ENCODE measurements at regions of chr4 and their contacts with region 1.

Region 1: DNA sequence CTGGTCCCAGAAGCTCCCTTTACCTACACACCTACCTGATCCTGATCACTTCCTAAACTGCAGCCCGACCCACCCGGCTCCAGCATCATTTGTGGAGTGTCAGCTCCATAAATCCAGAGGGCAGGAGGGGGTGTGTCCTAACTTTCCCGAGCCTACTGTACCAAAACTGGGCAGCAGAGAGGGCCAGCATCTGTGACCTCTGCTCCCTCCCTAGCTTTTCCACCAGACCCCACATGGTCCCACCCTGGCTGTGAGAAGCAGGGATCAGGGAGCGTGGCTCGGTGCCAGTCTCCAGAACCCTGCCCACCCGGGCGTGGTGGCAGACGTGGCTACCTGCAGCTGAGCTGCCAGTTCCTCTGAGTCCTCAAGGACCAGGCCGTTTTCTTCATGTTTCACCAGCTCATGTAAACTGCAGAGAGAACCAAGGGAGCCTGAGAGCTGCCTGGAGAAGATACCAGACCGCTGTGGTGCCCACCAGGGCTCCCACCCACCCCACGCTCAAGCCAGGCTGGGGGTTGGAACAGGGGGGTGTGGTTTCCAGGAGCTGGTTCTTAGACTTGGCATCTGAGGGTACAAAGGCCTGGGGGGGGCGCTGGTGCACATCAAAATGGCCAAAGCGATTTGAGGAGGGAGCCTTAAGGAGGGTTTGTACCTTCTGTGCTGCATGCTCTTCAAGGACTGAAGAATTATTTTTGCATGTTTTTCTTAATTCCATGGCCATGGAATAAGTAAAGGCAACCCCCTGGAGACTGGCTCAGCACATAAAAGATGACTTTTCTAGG is 76.7 kb upstream of the DRD5 start:
- DNase-seq: no peak
- ATAC-seq: no peak
- H3K4me3 ChIP-seq: no peak overlapping the region
- H3K27ac ChIP-seq: no peak overlapping the region
- H3K4me1 ChIP-seq: peaks cover 2 to 18% of the 10 kb centered on the region in 2 experiments; a peak in 2 of 4 replicates
- H3K27me3 ChIP-seq: no peaks in the 10 kb centered on the region
- CTCF ChIP-seq: 0 out of 6 replicates have a peak, but pooled peaks of 1 of the 3 experiments have one; percentile 3
- POLR2A ChIP-seq: no peak
- RAD21 ChIP-seq: no peak

Region 2: GRCh38 chr4:9691238-9692065 is 13.3 kb before region 1 on chr4:
- CTCF ChIA-PET with region 1: interaction called, 26 read pairs
- POLR2A ChIA-PET with region 1: no interaction called
- RAD21 ChIA-PET with region 1: no interaction called
- intact Hi-C with region 1: no loop called
- DNase-seq: peak; percentile 85
- ATAC-seq: peak; percentile 100
- H3K4me3 ChIP-seq: peak overlapping the region; percentile 38 to 55
- H3K27ac ChIP-seq: peak overlapping the region; percentile 39; the same call in 1 of the 2 replicates
- H3K4me1 ChIP-seq: peaks cover 3 to 17% of the 10 kb centered on the region in 2 experiments; a peak in 3 of 4 replicates
- H3K27me3 ChIP-seq: no peaks in the 10 kb centered on the region
- CTCF ChIP-seq: no peak
- POLR2A ChIP-seq: no peak
- RAD21 ChIP-seq: no peak

Region 3: GRCh38 chr4:9762823-9763475 is 58.2 kb after region 1 on chr4:
- CTCF ChIA-PET with region 1: interaction called, 5 read pairs
- POLR2A ChIA-PET with region 1: no interaction called
- RAD21 ChIA-PET with region 1: no interaction called
- intact Hi-C with region 1: loop called (anchors 5 kb)
- DNase-seq: peak; percentile 70
- ATAC-seq: peak; percentile 72
- H3K4me3 ChIP-seq: no peak overlapping the region
- H3K27ac ChIP-seq: no peak overlapping the region
- H3K4me1 ChIP-seq: no peaks in the 10 kb centered on the region
- H3K27me3 ChIP-seq: 0 out of 2 replicates have a peak, but pooled peaks cover 3% of the 10 kb centered on the region
- CTCF ChIP-seq: peak; percentile 66 to 89 (median 75)
- POLR2A ChIP-seq: no peak
- RAD21 ChIP-seq: peak; percentile 91

Region 4: DNA sequence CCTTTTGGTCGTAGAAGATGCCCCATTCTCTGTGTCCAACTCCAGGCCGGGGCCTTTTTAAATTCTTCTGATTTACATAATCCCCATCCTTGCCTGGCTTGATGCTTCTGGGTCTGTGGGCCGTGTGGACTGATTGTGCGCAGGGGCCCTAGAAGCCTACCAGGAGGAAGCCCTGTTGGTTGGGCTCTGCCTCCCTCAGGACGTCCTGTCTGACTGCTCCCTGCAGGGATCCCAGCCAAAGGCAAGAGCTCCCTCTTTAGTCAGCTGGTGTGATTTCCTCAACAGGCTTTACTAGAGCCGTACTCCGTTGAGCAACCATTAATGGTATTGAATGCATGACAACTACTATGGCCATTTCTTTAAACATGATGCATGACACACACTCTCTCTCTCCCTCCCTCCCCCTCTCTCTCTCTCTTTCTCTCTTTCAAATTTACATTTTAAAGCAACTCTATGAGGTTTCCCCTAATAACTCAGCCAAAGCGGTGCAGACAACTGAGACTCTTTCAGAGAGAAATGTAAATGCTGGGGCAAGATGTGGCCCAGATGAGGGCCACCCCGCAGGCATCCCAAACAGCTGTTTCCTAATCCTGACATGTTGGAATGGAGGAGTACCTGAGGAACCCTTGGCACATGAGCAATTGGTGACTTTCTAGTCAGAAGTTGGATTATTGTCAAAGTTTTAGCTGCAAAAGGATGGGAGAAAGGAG is 194.0 kb after region 1 on chr4:
- CTCF ChIA-PET with region 1: interaction called, 3 read pairs
- POLR2A ChIA-PET with region 1: no interaction called
- RAD21 ChIA-PET with region 1: no interaction called
- intact Hi-C with region 1: loop called (anchors 10 kb)
- DNase-seq: peak; percentile 35
- ATAC-seq: peak; percentile 98
- H3K4me3 ChIP-seq: no peak overlapping the region
- H3K27ac ChIP-seq: no peak overlapping the region
- H3K4me1 ChIP-seq: no peaks in the 10 kb centered on the region
- H3K27me3 ChIP-seq: no peaks in the 10 kb centered on the region
- CTCF ChIP-seq: peak; percentile 48 to 72 (median 50)
- POLR2A ChIP-seq: no peak
- RAD21 ChIP-seq: peak; percentile 72

Region 5: GRCh38 chr4:10013722-10014121 is 309.0 kb after region 1 on chr4:
- CTCF ChIA-PET with region 1: interaction called, 62 read pairs
- POLR2A ChIA-PET with region 1: interaction called, 5 read pairs
- RAD21 ChIA-PET with region 1: interaction called, 5 to 12 read pairs
- intact Hi-C with region 1: loop called (anchors 1 kb)
- DNase-seq: peak; percentile 18
- ATAC-seq: peak; percentile 72
- H3K4me3 ChIP-seq: no peak overlapping the region
- H3K27ac ChIP-seq: no peak overlapping the region
- H3K4me1 ChIP-seq: peaks cover 0 to 11% of the 10 kb centered on the region in 2 experiments; a peak in 1 of 4 replicates
- H3K27me3 ChIP-seq: no peaks in the 10 kb centered on the region
- CTCF ChIP-seq: peak in 2 of 3 experiments; percentile 65 to 73; a peak in 4 of 6 replicates
- POLR2A ChIP-seq: no peak
- RAD21 ChIP-seq: no peak